ENCODE measurements at regions of chr1 and their contacts with region 1.

Region 1: GRCh38 chr1:92872719-92873118 is 40.9 kb downstream of the RPL5 start:
- DNase-seq: no peak
- H3K4me3 ChIP-seq: no peak overlapping the region
- H3K27ac ChIP-seq: no peak overlapping the region
- H3K4me1 ChIP-seq: no peaks in the 10 kb centered on the region
- H3K27me3 ChIP-seq: no peaks in the 10 kb centered on the region
- CTCF ChIP-seq: no peak

Region 2: GRCh38 chr1:92343061-92343460 is 529.7 kb before region 1 on chr1:
- CTCF ChIA-PET with region 1: no interaction called
- POLR2A ChIA-PET with region 1: interaction called, 11 read pairs
- intact Hi-C with region 1: no loop called
- DNase-seq: no peak
- H3K4me3 ChIP-seq: no peak overlapping the region
- H3K27ac ChIP-seq: no peak overlapping the region
- H3K4me1 ChIP-seq: no peaks in the 10 kb centered on the region
- H3K27me3 ChIP-seq: no peaks in the 10 kb centered on the region
- CTCF ChIP-seq: no peak

Measured in PC-9 (cell line).